A673 (cell line): ENCODE measurements at regions of chr9 and their contacts with region 1.

Region 1: GRCh38 chr9:129626079-129626624 is at the start of gene NTMT1:
- DNase-seq: peak; percentile 88
- H3K4me3 ChIP-seq: peak within 1 kb of the TSS; percentile 97
- H3K27ac ChIP-seq: peak within 1 kb of the TSS; percentile 98
- H3K4me1 ChIP-seq: peaks cover 39% of the 10 kb centered on the region
- H3K27me3 ChIP-seq: no peaks in the 10 kb centered on the region
- CTCF ChIP-seq: no peak
- total RNA-seq, gene NTMT1: 82.8 and 87.1 TPM in 2 replicates

Region 2: DNA sequence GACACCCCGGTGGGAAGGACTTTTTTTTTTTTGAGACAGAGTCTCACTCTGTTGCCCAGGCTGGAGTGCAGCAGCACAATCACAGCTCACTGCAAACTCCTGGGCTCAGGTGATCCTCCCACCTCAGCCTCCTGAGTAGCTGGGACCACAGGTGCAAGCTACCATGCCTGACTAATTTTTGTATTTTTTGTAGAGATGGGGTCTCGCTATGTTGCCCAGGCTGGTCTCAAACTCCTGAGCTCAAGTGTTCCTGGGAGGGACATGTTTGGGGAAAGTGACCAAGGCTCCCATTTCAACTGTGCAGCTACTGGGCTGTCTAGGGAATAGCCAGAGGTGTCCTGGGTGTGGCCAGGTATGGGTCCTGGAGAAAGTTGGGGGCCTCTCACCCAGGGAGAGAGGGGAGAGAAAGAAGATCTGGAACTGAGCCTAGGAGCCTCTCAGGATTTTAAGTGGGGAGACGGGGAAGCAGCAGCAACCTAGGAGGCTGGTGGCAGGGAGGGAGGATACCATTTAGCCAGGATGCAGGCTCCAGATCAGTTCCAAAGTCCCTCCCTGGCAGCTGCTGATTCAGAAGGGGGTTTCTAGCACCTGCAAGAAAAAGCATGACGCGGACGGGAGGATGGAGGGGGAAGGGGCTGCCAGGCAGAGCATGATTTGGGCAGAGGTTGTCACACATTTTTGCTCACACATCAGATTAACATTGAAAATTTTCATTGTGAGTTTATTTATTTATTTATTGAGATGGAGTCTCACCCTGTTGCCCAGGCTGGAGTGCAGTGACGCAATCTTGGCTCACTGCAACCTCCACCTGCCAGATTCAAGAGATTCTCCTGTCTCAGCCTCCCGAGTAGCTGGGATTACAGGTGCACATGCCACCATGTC is 170.1 kb after region 1 on chr9:
- CTCF ChIA-PET with region 1: no interaction called
- POLR2A ChIA-PET with region 1: no interaction called
- intact Hi-C with region 1: loop called (anchors 5 kb)
- DNase-seq: no peak
- H3K4me3 ChIP-seq: no peak overlapping the region
- H3K27ac ChIP-seq: no peak overlapping the region
- H3K4me1 ChIP-seq: no peaks in the 10 kb centered on the region
- H3K27me3 ChIP-seq: peaks cover 13% of the 10 kb centered on the region
- CTCF ChIP-seq: no peak